Natural killer cell (primary cell): ENCODE measurements at regions of chr1 and their contacts with region 1.

Region 1: DNA sequence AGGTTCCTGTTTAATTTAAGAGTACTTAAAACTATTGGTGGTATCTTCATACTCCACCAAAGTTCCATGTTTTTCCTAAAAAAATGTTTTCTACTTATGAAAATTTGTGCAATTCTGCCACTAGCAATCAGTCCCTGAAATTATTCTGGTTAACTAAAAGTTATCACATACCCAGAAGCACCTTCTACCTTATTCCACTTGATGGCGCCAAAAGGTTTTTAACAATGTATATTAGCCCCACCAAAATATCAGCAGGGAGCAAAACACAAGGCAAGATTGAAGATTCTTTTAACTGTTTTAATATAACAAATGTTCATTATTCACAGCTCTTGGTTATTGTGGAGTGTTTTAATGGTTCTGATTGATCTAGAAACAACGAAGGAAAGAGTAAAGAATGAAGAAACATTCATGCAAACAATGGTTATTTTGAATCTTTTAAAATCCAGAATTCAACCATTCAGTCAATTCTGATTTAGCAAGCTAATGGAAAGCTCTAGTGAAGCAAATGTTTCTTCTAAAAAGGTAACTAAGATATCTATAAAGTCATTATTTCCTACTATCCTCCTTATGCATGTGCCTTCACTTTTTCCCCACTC is 67.2 kb downstream of the TTLL7 start:
- DNase-seq: peak in 1 of 2 donors; percentile 69
- ATAC-seq: peak; percentile 63 to 85 (median 83)
- H3K4me3 ChIP-seq: no peak overlapping the region
- H3K4me3 Mint-ChIP-seq: no peak overlapping the region
- H3K27ac ChIP-seq: no peak overlapping the region
- H3K27ac Mint-ChIP-seq: no peak overlapping the region
- H3K4me1 ChIP-seq: no peaks in the 10 kb centered on the region
- H3K4me1 Mint-ChIP-seq: no peaks in the 10 kb centered on the region
- H3K27me3 ChIP-seq: no peaks in the 10 kb centered on the region
- H3K27me3 Mint-ChIP-seq: peaks cover 2 to 13% of the 10 kb centered on the region in 2 donors
- CTCF ChIP-seq: peak; percentile 80

Region 2: DNA sequence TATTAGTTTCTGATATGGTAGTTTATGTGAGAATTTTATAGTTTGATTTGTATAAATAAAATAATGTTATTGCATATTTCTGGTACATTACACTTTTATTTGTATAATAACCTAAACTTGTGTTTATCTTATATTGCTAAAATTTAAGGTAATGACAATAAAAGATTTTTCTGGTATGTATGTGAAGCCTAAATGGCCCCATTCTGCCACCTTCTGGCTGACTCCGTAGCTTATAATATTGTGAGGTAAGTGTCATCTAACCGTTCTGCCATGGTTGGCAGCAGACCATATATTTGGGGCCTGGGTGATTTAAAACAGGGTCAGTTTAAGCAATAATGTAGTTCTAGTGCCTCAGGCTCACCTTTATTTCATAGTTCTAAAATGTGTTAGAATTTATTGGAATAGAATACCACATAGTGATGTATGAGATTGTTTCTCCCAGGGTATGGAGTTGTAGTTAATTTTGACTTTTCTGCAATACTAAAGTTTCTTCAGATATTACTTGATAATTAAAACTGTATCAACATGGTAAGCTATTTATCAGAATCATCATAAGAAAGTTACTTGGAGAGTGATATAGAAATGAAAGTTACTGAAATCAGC is 191.1 kb after region 1 on chr1:
- intact Hi-C with region 1: loop called (anchors 1 kb)
- DNase-seq: peak; percentile 21 to 76
- ATAC-seq: peak in 2 of 3 donors; percentile 71 to 82
- H3K4me3 ChIP-seq: no peak overlapping the region
- H3K4me3 Mint-ChIP-seq: no peak overlapping the region
- H3K27ac ChIP-seq: no peak overlapping the region
- H3K27ac Mint-ChIP-seq: no peak overlapping the region
- H3K4me1 ChIP-seq: no peaks in the 10 kb centered on the region
- H3K4me1 Mint-ChIP-seq: no peaks in the 10 kb centered on the region
- H3K27me3 ChIP-seq: no peaks in the 10 kb centered on the region
- H3K27me3 Mint-ChIP-seq: no peaks in the 10 kb centered on the region
- CTCF ChIP-seq: peak; percentile 79

Region 3: GRCh38 chr1:84202126-84202525 is 270.4 kb after region 1 on chr1:
- intact Hi-C with region 1: no loop called
- DNase-seq: no peak
- ATAC-seq: no peak
- H3K4me3 ChIP-seq: no peak overlapping the region
- H3K4me3 Mint-ChIP-seq: no peak overlapping the region
- H3K27ac ChIP-seq: no peak overlapping the region
- H3K27ac Mint-ChIP-seq: peak overlapping the region; percentile 27 to 53
- H3K4me1 ChIP-seq: no peaks in the 10 kb centered on the region
- H3K4me1 Mint-ChIP-seq: peaks cover 11 to 18% of the 10 kb centered on the region in 2 donors
- H3K27me3 ChIP-seq: no peaks in the 10 kb centered on the region
- H3K27me3 Mint-ChIP-seq: no peaks in the 10 kb centered on the region
- CTCF ChIP-seq: no peak

Region 4: GRCh38 chr1:84753516-84754385 is 822.0 kb after region 1 on chr1:
- intact Hi-C with region 1: loop called (anchors 5 kb)
- DNase-seq: peak; percentile 69 to 87
- ATAC-seq: peak; percentile 83 to 97 (median 96)
- H3K4me3 ChIP-seq: no peak overlapping the region
- H3K4me3 Mint-ChIP-seq: no peak overlapping the region
- H3K27ac ChIP-seq: no peak overlapping the region
- H3K27ac Mint-ChIP-seq: no peak overlapping the region
- H3K4me1 ChIP-seq: no peaks in the 10 kb centered on the region
- H3K4me1 Mint-ChIP-seq: peaks cover 4 to 5% of the 10 kb centered on the region in 2 donors
- H3K27me3 ChIP-seq: peaks cover 6% of the 10 kb centered on the region
- H3K27me3 Mint-ChIP-seq: peaks cover 10 to 37% of the 10 kb centered on the region in 2 donors
- CTCF ChIP-seq: peak; percentile 92